ENCODE measurements at regions of chr1 and their contacts with region 1.

Region 1: DNA sequence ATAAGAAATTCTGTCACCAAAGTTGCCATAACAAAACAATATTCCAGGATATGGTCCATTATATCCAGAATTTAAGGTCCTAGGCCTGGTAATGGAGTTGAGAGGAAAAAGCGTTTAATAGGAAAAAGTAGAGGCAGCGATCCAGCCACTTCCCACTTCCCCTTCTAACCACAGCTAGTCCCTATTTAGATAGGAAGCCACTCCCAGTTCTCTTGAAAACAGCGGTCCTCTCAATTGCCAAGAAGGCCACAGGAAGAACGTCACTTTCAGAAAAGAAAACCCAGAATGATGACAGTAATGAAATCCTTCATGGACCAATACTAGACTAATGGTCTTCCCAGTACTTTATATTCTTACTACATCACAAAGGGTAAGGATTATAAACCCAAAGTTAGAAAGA is 38.6 kb downstream of the ABL2 start:
- DNase-seq: no peak
- H3K4me3 ChIP-seq: no peak overlapping the region
- H3K27ac ChIP-seq: no peak overlapping the region
- H3K4me1 ChIP-seq: no peaks in the 10 kb centered on the region
- H3K27me3 ChIP-seq: no peaks in the 10 kb centered on the region
- CTCF ChIP-seq: no peak

Region 2: GRCh38 chr1:179121159-179121938 is 69.5 kb before region 1 on chr1:
- CTCF ChIA-PET with region 1: interaction called, 3 read pairs
- POLR2A ChIA-PET with region 1: no interaction called
- intact Hi-C with region 1: loop called (anchors 1 kb)
- DNase-seq: peak; percentile 15 to 40
- H3K4me3 ChIP-seq: no peak overlapping the region
- H3K27ac ChIP-seq: no peak overlapping the region
- H3K4me1 ChIP-seq: no peaks in the 10 kb centered on the region; the same call in 1 of the 2 replicates
- H3K27me3 ChIP-seq: no peaks in the 10 kb centered on the region
- CTCF ChIP-seq: peak; percentile 78

Region 3: GRCh38 chr1:179278920-179279319 is 88.1 kb after region 1 on chr1:
- CTCF ChIA-PET with region 1: no interaction called
- POLR2A ChIA-PET with region 1: no interaction called
- intact Hi-C with region 1: no loop called
- DNase-seq: no peak
- H3K4me3 ChIP-seq: no peak overlapping the region
- H3K27ac ChIP-seq: no peak overlapping the region
- H3K4me1 ChIP-seq: no peaks in the 10 kb centered on the region
- H3K27me3 ChIP-seq: no peaks in the 10 kb centered on the region
- CTCF ChIP-seq: no peak

Measured in PC-9 (cell line).